Ovary (tissue), 10 donors: ENCODE measurements at regions of chr5 and their contacts with region 1.

Region 1: GRCh38 chr5:177446200-177447065 is at the start of gene PRR7:
- DNase-seq: peak; percentile 55 to 80 (median 69)
- H3K4me3 ChIP-seq: peak within 1 kb of the TSS; percentile 42
- H3K27ac ChIP-seq: no peak within 1 kb of the TSS
- H3K4me1 ChIP-seq: peaks cover 6% of the 10 kb centered on the region
- H3K27me3 ChIP-seq: no peaks in the 10 kb centered on the region
- CTCF ChIP-seq: peak in 2 of 3 donors; percentile 8 to 9
- EP300 ChIP-seq: no peak
- POLR2A ChIP-seq: no peak
- total RNA-seq, gene PRR7: 0.66 to 11.4 (median 2.1) TPM

Region 2: DNA sequence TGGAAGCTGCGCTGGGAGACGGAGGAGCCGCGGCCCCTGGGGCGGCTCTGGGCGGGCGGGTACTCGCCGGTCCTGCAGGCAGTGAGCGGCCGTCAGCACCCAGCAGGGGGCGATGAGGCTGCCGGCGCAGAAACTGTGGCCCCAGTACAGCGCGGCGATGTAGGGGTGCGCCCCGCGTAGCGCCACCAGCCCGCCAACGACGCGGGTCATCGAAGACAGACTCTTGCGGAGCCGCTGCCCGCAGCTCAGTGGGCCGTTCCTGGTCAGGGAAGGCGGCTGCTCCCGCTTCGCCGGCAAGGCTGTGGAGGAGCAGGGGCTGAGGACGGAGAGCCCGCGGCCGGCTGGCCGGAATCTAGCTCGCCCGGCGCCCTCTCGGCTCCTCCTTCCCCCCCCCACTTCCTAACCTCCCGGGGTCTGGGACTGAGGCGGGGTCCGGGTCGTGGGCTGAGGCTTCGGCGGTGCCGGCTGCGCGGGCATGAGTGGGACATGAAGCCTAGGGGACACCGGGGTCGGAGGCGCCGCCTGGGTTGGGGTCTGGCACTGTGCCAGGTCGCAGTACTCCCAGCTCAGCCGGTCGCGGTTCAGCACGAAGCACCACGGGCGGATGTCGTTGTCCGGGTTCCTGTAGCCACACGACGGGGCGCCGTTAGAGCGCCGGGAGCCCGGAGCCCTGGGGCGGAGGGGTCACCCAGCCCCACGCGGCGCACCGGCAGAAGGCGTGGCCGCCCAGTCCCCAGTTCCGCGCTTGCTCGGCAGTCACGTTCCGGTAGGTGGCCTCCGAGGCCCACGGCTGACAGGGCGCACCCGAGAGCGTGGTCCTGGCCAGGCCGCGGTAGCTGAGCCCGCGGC is 42.4 kb before region 1 on chr5:
- intact Hi-C with region 1: loop called in 2 of 4 experiments (anchors 2 to 5 kb)
- DNase-seq: peak; percentile 79 to 88 (median 84)
- H3K4me3 ChIP-seq: peak overlapping the region; percentile 33
- H3K27ac ChIP-seq: no peak overlapping the region
- H3K4me1 ChIP-seq: peaks cover 9% of the 10 kb centered on the region
- H3K27me3 ChIP-seq: peaks cover 5% of the 10 kb centered on the region
- CTCF ChIP-seq: peak; percentile 62 to 83 (median 81)
- EP300 ChIP-seq: no peak
- POLR2A ChIP-seq: no peak

Region 3: DNA sequence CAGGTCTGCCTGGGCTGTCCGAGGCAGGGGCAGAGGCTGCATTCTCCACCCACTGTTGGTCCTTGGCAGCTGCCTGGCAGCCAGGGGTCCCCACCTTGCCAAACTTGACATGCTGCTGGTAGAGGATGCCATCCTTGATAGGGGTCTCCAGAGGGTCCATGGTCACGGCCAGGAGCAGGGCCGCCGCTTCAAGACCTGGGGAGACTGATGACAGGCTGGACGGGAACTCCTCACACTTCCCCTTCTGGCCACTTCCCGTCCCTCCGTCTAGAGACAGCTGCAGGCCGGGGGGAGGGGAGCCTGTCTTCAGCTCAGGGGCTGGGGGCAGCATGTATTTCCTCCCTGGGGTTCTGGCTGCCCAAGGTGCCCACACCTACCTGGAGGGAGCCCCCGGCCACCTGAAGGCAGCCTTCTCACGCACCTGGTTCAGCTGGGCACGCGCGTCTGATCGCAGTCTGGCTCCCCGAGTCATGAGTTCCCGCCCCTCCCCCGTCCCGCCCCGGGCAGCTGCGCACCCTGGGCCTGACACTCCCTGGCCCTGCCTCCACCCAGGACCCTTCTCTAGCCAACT is 63.0 kb after region 1 on chr5 and contains the start of gene DOK3:
- intact Hi-C with region 1: no loop called
- DNase-seq: peak in 1 of 5 donors; percentile 30
- H3K4me3 ChIP-seq: no peak within 1 kb of the TSS
- H3K27ac ChIP-seq: no peak within 1 kb of the TSS
- H3K4me1 ChIP-seq: no peaks in the 10 kb centered on the region
- H3K27me3 ChIP-seq: no peaks in the 10 kb centered on the region
- CTCF ChIP-seq: no peak
- EP300 ChIP-seq: no peak
- POLR2A ChIP-seq: no peak
- total RNA-seq, gene DOK3: 1.3 to 7.2 (median 2.5) TPM